Naive thymus-derived CD4-positive, alpha-beta T cell (primary cell): ENCODE measurements at regions of chr21 and their contacts with region 1.

Region 1: GRCh38 chr21:44547656-44548331 is 3.5 kb downstream of the KRTAP10-2 start:
- DNase-seq: peak in 8 of 9 donors; percentile 16 to 73 (median 59)
- ATAC-seq: peak; percentile 74
- H3K4me3 ChIP-seq: peak overlapping the region; percentile 50
- H3K4me3 Mint-ChIP-seq: peak overlapping the region; percentile 75 to 86 (median 83)
- H3K27ac ChIP-seq: peak overlapping the region; percentile 56
- H3K27ac Mint-ChIP-seq: peak overlapping the region; percentile 85 to 99 (median 95)
- H3K4me1 ChIP-seq: peaks cover 15 to 19% of the 10 kb centered on the region in 2 donors
- H3K4me1 Mint-ChIP-seq: peaks cover 16 to 34% (median 30%) of the 10 kb centered on the region in 7 donors
- H3K27me3 ChIP-seq: no peaks in the 10 kb centered on the region
- H3K27me3 Mint-ChIP-seq: peaks cover 0 to 5% (median 0%) of the 10 kb centered on the region in 5 donors

Region 2: GRCh38 chr21:44697811-44698734 is 150.3 kb after region 1 on chr21:
- CTCF ChIA-PET with region 1: no interaction called
- POLR2A ChIA-PET with region 1: no interaction called
- intact Hi-C with region 1: loop called in 1 of 2 experiments (anchors 10 kb)
- DNase-seq: no peak
- ATAC-seq: no peak
- H3K4me3 ChIP-seq: no peak overlapping the region
- H3K4me3 Mint-ChIP-seq: peak overlapping the region in 1 of 10 donors; percentile 42
- H3K27ac ChIP-seq: no peak overlapping the region
- H3K27ac Mint-ChIP-seq: peak overlapping the region in 1 of 9 donors; percentile 36
- H3K4me1 ChIP-seq: no peaks in the 10 kb centered on the region
- H3K4me1 Mint-ChIP-seq: peaks cover 2 to 21% (median 12%) of the 10 kb centered on the region in 7 donors
- H3K27me3 ChIP-seq: peaks cover 0 to 3% of the 10 kb centered on the region in 2 donors
- H3K27me3 Mint-ChIP-seq: peaks cover 53 to 73% (median 54%) of the 10 kb centered on the region in 5 donors